BJ (cell line): ENCODE measurements at regions of chr3 and their contacts with region 1.

Region 1: GRCh38 chr3:124786441-124787241 is 56.4 kb downstream of the UMPS start:
- DNase-seq: no peak
- H3K4me3 ChIP-seq: no peak overlapping the region
- H3K27me3 ChIP-seq: no peaks in the 10 kb centered on the region
- CTCF ChIP-seq: peak; percentile 45

Region 2: GRCh38 chr3:124688581-124689454 is 97.8 kb before region 1 on chr3:
- CTCF ChIA-PET with region 1: no interaction called
- POLR2A ChIA-PET with region 1: no interaction called
- DNase-seq: no peak
- H3K4me3 ChIP-seq: no peak overlapping the region
- H3K27me3 ChIP-seq: no peaks in the 10 kb centered on the region; the same call in 1 of the 2 replicates
- CTCF ChIP-seq: peak; percentile 87

Region 3: DNA sequence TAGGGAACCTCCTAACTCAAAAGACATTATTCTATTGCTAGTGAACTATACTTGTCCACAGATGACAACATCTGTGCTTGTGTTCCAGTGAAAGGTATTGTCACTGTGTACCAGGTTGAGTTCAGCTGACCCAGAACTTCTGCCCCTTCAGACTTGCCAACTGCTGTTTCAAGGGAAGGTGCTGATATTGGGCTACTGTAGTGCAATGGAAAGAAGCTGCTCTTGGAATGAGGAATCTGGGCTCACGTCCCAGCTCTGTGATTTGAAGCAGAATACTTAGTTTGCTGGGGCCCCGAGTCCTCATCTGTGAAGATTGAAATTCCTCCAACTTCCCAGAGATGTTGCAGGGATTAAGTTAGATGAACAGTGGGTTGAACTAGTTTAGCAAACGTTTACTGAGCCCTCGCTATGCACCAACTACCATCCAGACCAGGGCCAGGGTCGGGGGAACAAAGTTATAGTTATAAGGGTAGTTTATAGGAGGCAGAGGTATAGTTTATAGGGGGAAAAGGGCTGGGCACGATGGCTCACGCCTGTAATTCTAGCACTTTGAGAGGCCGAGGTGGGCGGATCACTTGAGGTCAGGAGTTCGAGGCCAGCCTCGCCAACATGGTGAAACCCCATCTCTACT is 72.3 kb before region 1 on chr3:
- CTCF ChIA-PET with region 1: no interaction called
- POLR2A ChIA-PET with region 1: no interaction called
- DNase-seq: no peak
- H3K4me3 ChIP-seq: no peak overlapping the region
- H3K27me3 ChIP-seq: peaks cover 9% of the 10 kb centered on the region
- CTCF ChIP-seq: no peak

Region 4: GRCh38 chr3:124768812-124769211 is 17.8 kb before region 1 on chr3:
- CTCF ChIA-PET with region 1: interaction called, 42 read pairs
- POLR2A ChIA-PET with region 1: interaction called, 4 read pairs
- DNase-seq: no peak
- H3K4me3 ChIP-seq: no peak overlapping the region
- H3K27me3 ChIP-seq: no peaks in the 10 kb centered on the region
- CTCF ChIP-seq: no peak

Region 5: GRCh38 chr3:124895756-124896155 is 109.1 kb after region 1 on chr3:
- CTCF ChIA-PET with region 1: interaction called, 79 read pairs
- POLR2A ChIA-PET with region 1: no interaction called
- DNase-seq: no peak
- H3K4me3 ChIP-seq: no peak overlapping the region
- H3K27me3 ChIP-seq: no peaks in the 10 kb centered on the region
- CTCF ChIP-seq: no peak